ENCODE measurements at regions of chr3 and their contacts with region 1.

Region 1: GRCh38 chr3:187679638-187680396 is 9.6 kb upstream of the SST start:
- DNase-seq: peak; percentile 90

Region 2: DNA sequence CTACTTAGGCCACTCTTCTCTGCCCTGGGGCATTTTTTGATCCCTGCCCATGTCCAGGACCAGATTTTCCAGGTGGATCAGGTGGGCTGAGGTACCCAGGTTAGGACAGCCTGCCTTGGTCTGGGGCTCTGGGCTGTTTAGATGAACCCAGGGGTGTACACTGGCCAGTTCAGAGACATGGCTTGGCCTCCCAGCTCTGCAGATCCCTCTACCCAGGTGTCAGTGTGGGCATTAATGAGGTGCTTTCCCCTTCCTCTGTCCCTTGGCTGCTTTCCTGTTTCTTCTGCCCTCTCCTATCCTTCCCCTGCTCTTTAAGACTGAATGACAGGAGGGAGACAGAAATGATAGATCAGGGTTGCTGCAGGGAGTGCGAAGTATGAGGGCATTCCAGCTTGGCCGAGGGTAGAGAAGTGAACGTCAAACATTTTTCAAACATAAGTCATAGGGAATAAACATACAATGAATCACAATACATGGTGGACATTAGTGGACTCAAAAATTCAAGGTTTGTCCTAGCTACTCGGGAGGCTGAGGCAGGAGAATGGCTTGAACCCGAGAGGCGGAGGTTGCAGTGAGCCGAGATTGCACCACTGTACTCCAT is 452.1 kb before region 1 on chr3:
- intact Hi-C with region 1: loop called in 1 of 2 experiments (anchors 10 kb)
- DNase-seq: no peak

Region 3: DNA sequence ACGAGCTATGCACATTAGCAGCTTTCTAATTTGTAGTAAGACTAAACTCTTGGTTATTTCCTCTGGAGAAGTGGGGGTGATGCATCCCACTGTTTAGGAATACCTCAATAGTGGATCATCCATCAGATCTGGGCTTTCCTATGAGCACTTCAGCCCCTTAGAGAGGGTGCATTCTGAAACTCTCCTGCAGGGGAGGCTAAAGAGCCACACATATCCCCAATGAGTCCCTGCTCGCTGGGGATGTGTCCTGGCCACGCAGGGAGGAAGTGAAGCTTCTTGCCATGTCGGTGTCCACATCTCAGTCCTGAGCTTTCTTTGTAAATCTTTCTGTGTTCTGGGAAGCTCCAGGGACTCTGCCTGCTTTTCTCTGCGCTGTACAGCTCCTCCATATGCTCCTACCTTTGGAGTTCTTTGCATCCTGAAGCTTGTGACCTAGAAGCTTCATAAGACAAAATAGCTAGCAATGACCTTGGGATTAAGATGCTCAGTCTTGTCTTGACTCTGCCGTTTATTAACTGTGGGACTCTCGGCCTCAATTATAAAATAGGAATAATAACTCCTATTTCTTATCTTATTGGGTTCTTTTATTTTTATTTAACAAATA is 360.0 kb before region 1 on chr3:
- intact Hi-C with region 1: loop called (anchors 2 kb)
- DNase-seq: no peak

Region 4: DNA sequence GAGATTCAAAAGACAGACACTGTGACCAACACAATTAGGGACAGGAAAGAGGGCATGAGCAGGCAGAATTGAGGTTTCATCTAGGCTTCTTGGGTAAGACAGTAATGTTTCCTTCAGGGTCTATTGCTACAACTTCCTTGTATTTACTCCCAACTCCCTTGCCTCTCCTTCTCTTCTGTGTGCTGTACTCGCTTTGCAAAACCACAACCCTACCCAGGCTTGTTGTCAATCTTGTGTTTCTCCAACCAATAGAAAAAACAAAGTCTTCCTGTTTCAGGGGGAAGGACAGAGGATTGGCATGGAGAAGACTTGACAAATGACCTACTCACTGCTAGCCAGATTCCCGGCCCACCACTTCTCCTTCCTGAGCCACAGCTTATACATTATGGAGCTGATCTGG is 352.0 kb before region 1 on chr3:
- intact Hi-C with region 1: loop called in 1 of 2 experiments (anchors 2 kb)
- DNase-seq: no peak